Activated naive CD4-positive, alpha-beta T cell treated with anti-CD3 and anti-CD28 coated beads for 36 hours (primary cell): ENCODE measurements at regions of chr2 and their contacts with region 1.

Region 1: GRCh38 chr2:133780099-133780839 is 212.0 kb upstream of the NCKAP5 start:
- DNase-seq: peak; percentile 48
- H3K4me3 Mint-ChIP-seq: no peak overlapping the region
- H3K27ac Mint-ChIP-seq: no peak overlapping the region
- H3K4me1 Mint-ChIP-seq: no peaks in the 10 kb centered on the region
- H3K27me3 Mint-ChIP-seq: peaks cover 2% of the 10 kb centered on the region

Region 2: GRCh38 chr2:132547074-132547687 is 1233.1 kb before region 1 on chr2:
- CTCF ChIA-PET with region 1: no interaction called
- intact Hi-C with region 1: loop called (anchors 1 kb)
- DNase-seq: peak; percentile 77
- H3K4me3 Mint-ChIP-seq: no peak overlapping the region
- H3K27ac Mint-ChIP-seq: no peak overlapping the region
- H3K4me1 Mint-ChIP-seq: no peaks in the 10 kb centered on the region
- H3K27me3 Mint-ChIP-seq: peaks cover 4% of the 10 kb centered on the region

Region 3: GRCh38 chr2:133521146-133521745 is 259.0 kb before region 1 on chr2:
- CTCF ChIA-PET with region 1: no interaction called
- intact Hi-C with region 1: loop called (anchors 5 kb)
- DNase-seq: no peak
- H3K4me3 Mint-ChIP-seq: no peak overlapping the region
- H3K27ac Mint-ChIP-seq: no peak overlapping the region
- H3K4me1 Mint-ChIP-seq: no peaks in the 10 kb centered on the region
- H3K27me3 Mint-ChIP-seq: no peaks in the 10 kb centered on the region